Activated B cell treated with CpG ODN at 0.5 μM for 24 hours (primary cell): ENCODE measurements at regions of chr12 and their contacts with region 1.

Region 1: DNA sequence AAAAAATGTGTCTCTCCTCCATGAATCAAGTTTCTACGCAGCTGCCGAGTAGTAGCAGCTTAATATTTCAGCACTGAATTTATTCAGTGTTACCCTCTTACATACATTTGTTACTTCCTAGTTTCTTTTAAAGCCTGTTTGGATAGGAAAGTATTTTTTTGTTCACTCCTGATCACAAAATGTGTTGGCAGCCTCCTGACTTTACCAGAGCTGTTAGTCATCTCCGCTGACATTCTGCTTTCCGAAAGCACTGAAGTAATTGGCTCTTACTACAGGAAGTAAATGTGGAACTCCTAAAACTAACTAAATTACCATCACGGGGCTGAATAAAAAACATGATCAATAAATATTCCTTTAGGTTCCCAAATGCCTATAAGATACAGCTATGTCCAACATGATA is 225.5 kb downstream of the EPS8 start:
- DNase-seq: no peak
- ATAC-seq: peak; percentile 68
- H3K4me3 Mint-ChIP-seq: peak overlapping the region; percentile 81
- H3K27ac Mint-ChIP-seq: peak overlapping the region; percentile 86
- H3K4me1 Mint-ChIP-seq: peaks cover 24% of the 10 kb centered on the region
- H3K27me3 Mint-ChIP-seq: no peaks in the 10 kb centered on the region
- CTCF ChIP-seq: no peak

Region 2: DNA sequence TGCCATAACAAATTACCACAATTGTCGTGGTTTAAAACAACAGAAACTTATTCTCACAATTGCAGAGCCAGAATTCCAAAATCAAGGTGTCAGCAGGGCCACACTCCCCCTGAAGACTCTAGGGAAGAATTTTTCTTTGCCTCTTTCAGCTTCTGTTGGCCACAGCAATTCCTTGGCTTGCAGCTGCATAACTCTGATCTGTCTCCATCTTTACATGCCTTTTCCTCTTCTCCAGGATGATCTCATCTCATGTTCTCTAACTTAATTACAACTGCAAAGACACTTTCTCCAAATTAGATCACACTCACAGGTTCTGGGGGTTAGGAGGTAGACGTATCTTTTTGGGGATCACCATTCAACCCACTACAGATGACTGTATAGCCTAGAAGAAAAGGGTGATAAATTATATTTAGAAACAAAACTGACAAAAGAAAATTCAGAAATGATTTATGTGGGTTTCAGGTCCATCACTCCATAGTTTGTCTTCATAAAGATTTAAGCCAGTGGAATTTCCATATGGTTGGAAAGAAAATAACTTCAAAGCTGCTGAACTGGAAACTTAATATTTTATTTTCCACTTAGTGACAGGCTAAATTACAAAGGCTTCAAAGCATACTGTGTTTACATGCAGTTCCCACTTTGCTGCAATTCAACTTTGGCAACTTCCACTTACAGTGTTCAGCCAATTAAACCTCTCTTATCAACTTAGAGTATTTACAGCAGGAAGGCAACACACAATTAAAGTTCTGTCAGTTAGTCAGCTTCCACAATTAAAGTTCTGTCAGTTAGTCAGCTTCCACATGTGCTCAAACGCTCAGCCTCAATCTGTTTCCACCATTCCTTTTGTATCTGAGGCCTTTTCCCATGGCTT is 12.2 kb after region 1 on chr12:
- CTCF ChIA-PET with region 1: no interaction called
- POLR2A ChIA-PET with region 1: interaction called, 5 read pairs
- intact Hi-C with region 1: loop called (anchors 1 kb)
- DNase-seq: no peak
- ATAC-seq: no peak
- H3K4me3 Mint-ChIP-seq: no peak overlapping the region
- H3K27ac Mint-ChIP-seq: no peak overlapping the region
- H3K4me1 Mint-ChIP-seq: peaks cover 10% of the 10 kb centered on the region
- H3K27me3 Mint-ChIP-seq: no peaks in the 10 kb centered on the region
- CTCF ChIP-seq: no peak

Region 3: GRCh38 chr12:15599266-15600037 is 35.8 kb after region 1 on chr12:
- CTCF ChIA-PET with region 1: no interaction called
- POLR2A ChIA-PET with region 1: no interaction called
- intact Hi-C with region 1: no loop called
- DNase-seq: no peak
- ATAC-seq: no peak
- H3K4me3 Mint-ChIP-seq: no peak overlapping the region
- H3K27ac Mint-ChIP-seq: no peak overlapping the region
- H3K4me1 Mint-ChIP-seq: no peaks in the 10 kb centered on the region
- H3K27me3 Mint-ChIP-seq: no peaks in the 10 kb centered on the region
- CTCF ChIP-seq: no peak

Region 4: GRCh38 chr12:15688202-15688736 is 124.6 kb after region 1 on chr12:
- CTCF ChIA-PET with region 1: no interaction called
- POLR2A ChIA-PET with region 1: no interaction called
- intact Hi-C with region 1: no loop called
- DNase-seq: no peak
- ATAC-seq: peak; percentile 64
- H3K4me3 Mint-ChIP-seq: peak overlapping the region; percentile 9
- H3K27ac Mint-ChIP-seq: no peak overlapping the region
- H3K4me1 Mint-ChIP-seq: peaks cover 12% of the 10 kb centered on the region
- H3K27me3 Mint-ChIP-seq: no peaks in the 10 kb centered on the region
- CTCF ChIP-seq: no peak